ENCODE measurements at regions of chr1 and their contacts with region 1.

Region 1: GRCh38 chr1:234592242-234592641 is 17.7 kb downstream of the IRF2BP2 start:
- DNase-seq: no peak
- H3K4me3 ChIP-seq: no peak overlapping the region
- H3K27ac ChIP-seq: no peak overlapping the region
- H3K4me1 ChIP-seq: peaks cover 0 to 3% (median under 1%) of the 10 kb centered on the region in 4 donors
- H3K27me3 ChIP-seq: no peaks in the 10 kb centered on the region
- CTCF ChIP-seq: no peak
- EP300 ChIP-seq: no peak
- POLR2A ChIP-seq: no peak

Region 2: DNA sequence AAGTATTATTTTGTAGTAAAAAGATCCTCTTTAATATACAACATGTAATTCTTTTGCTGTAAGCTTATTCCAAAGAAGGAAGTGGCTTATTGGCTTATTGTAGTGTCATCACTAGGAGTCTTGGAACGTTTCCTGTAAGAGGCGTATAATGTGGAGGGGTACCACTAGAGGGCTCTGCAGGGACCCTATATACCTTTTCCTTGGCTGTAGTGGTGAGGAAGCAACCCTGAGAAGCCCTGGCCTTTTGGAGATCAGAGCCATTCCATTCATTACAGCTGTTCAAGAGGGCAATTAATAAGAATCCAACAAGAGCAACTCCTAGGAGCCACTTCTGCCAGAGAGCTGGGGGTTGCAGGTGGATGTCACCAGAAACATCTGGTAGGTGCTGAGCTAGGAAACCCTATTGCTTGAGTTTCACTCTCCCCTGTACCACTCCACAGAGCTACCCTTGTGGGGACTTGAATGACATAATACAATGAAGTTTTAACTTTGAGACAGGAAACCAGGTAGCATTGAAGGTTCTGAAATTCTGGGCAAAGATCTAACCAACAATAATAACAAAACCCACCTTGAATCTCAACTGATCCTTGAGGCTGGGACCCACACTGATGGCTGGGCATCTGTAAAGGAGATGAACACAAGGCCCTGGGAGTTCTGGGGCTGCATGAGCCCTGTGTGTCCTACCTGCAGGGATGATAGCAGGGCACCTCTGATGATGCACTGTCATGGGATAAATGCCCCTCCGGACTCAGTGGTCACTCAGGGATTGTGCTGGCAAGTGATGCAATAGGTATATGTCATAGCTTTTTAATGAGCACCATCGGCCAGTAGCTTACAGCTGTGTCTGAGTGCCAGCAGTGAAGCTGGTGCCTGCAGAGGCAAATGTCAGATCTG is 379.2 kb before region 1 on chr1:
- in situ Hi-C with region 1: no loop called
- intact Hi-C with region 1: no loop called
- DNase-seq: no peak
- H3K4me3 ChIP-seq: no peak overlapping the region
- H3K27ac ChIP-seq: no peak overlapping the region
- H3K4me1 ChIP-seq: peaks cover 0 to 12% (median 9%) of the 10 kb centered on the region in 4 donors
- H3K27me3 ChIP-seq: peaks cover 55% of the 10 kb centered on the region
- CTCF ChIP-seq: peak in 2 of 5 experiments; percentile 22 to 25
- EP300 ChIP-seq: no peak
- POLR2A ChIP-seq: no peak

Region 3: DNA sequence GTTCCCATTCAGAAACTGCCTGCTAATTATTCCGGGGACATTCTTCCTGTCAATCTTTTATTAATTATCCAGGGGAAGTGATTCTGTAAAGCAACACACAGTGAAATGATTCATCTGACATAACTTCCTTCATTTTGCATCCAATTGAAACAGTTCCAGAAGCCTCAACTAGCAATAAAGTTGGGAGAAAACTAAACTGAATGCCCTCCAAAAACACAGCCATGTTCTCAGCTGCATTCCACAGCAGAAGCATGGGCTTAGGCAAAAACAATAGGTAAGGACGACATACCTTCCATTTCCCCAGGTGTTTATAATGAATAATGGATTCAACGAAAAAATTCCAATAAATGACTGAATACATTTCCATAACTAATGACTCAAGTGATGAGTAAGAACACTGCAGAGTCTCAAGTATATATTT is 76.4 kb before region 1 on chr1:
- in situ Hi-C with region 1: no loop called
- intact Hi-C with region 1: no loop called
- DNase-seq: no peak
- H3K4me3 ChIP-seq: no peak overlapping the region
- H3K27ac ChIP-seq: peak overlapping the region; percentile 44 to 61 (median 56)
- H3K4me1 ChIP-seq: peaks cover 0 to 11% (median 3%) of the 10 kb centered on the region in 4 donors
- H3K27me3 ChIP-seq: no peaks in the 10 kb centered on the region
- CTCF ChIP-seq: no peak
- EP300 ChIP-seq: no peak
- POLR2A ChIP-seq: no peak

Region 4: GRCh38 chr1:234564642-234565037 is 27.6 kb before region 1 on chr1:
- in situ Hi-C with region 1: no loop called
- intact Hi-C with region 1: loop called (anchors 2 kb)
- DNase-seq: no peak
- H3K4me3 ChIP-seq: no peak overlapping the region
- H3K27ac ChIP-seq: no peak overlapping the region
- H3K4me1 ChIP-seq: no peaks in the 10 kb centered on the region
- H3K27me3 ChIP-seq: no peaks in the 10 kb centered on the region
- CTCF ChIP-seq: no peak
- EP300 ChIP-seq: no peak
- POLR2A ChIP-seq: no peak

Region 5: DNA sequence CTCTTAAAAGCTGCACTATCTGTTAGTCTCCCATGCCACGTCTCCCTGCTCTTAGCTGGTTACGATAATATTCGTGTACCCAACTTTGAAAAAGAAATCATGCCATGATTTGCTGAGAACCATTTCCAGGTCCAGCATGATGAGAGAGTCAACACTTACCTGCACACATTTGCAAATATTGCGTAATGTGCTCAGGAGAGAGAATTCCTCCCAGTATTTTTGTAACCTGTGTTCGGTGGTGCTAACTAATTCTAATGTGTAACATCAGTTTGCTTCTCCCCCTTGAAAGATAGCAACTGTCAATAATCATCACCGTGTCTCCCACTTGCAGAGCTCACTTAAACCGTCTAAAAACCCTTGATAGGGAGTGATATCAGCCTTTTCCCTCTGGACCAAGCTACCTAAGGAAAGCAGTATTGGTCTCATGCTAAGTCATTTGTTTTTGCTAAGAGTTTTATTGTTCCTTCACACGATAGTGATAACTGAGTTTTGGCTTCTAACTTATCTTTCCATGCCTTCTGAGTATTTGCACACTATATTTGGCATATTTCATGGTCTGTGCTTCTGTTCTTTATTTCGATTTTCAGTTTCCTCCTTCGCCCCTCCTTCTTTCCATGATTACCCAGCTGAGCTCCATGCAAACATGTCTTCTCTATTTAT is 78.9 kb after region 1 on chr1:
- in situ Hi-C with region 1: no loop called
- intact Hi-C with region 1: no loop called
- DNase-seq: no peak
- H3K4me3 ChIP-seq: no peak overlapping the region
- H3K27ac ChIP-seq: no peak overlapping the region
- H3K4me1 ChIP-seq: peaks cover 0 to 8% (median 0%) of the 10 kb centered on the region in 4 donors
- H3K27me3 ChIP-seq: no peaks in the 10 kb centered on the region
- CTCF ChIP-seq: no peak
- EP300 ChIP-seq: no peak
- POLR2A ChIP-seq: no peak

Measured in transverse colon (tissue), 4 donors.